HEK293 (cell line): ENCODE measurements at regions of chr2 and their contacts with region 1.

Region 1: GRCh38 chr2:10103179-10103732 is 19.3 kb upstream of the RRM2 start:
- H3K4me3 ChIP-seq: no peak overlapping the region
- H3K27ac ChIP-seq: no peak overlapping the region
- H3K4me1 ChIP-seq: 0 out of 2 replicates have a peak, but pooled peaks cover 2% of the 10 kb centered on the region
- CTCF ChIP-seq: no peak

Region 2: GRCh38 chr2:9095690-9096351 is 1007.4 kb before region 1 on chr2:
- CTCF ChIA-PET with region 1: no interaction called
- POLR2A ChIA-PET with region 1: interaction called, 10 read pairs
- H3K4me3 ChIP-seq: no peak overlapping the region
- H3K27ac ChIP-seq: no peak overlapping the region
- H3K4me1 ChIP-seq: no peaks in the 10 kb centered on the region
- CTCF ChIP-seq: no peak

Region 3: DNA sequence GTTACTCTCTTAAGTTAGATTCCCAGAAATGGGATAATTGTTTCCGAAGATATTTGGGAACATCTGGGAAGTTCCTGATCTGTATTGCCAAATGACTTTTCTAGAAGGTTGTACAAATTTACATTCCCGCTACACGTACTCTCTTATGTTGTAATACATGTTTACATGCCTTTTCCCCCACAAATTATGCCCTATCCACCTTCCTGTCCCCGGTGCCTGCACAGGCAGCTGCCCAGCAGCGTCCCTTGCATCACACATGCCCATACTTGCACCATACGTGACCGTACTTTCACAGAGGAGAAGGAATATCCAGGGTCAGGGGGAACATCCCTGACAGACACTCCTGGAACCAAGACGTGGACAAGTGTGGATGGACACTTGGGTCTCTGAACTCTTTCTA is 84.1 kb before region 1 on chr2:
- CTCF ChIA-PET with region 1: no interaction called
- POLR2A ChIA-PET with region 1: no interaction called
- H3K4me3 ChIP-seq: no peak overlapping the region
- H3K27ac ChIP-seq: no peak overlapping the region
- H3K4me1 ChIP-seq: no peaks in the 10 kb centered on the region
- CTCF ChIP-seq: no peak

Region 4: GRCh38 chr2:10157293-10157692 is 54.0 kb after region 1 on chr2:
- CTCF ChIA-PET with region 1: no interaction called
- POLR2A ChIA-PET with region 1: no interaction called
- H3K4me3 ChIP-seq: no peak overlapping the region
- H3K27ac ChIP-seq: no peak overlapping the region
- H3K4me1 ChIP-seq: no peaks in the 10 kb centered on the region
- CTCF ChIP-seq: no peak

Region 5: GRCh38 chr2:10307561-10308156 is 204.4 kb after region 1 on chr2:
- CTCF ChIA-PET with region 1: no interaction called
- POLR2A ChIA-PET with region 1: no interaction called
- H3K4me3 ChIP-seq: no peak overlapping the region
- H3K27ac ChIP-seq: no peak overlapping the region
- H3K4me1 ChIP-seq: 0 out of 2 replicates have a peak, but pooled peaks cover 4% of the 10 kb centered on the region
- CTCF ChIP-seq: no peak